ENCODE measurements at regions of chr19 and their contacts with region 1.

Region 1: DNA sequence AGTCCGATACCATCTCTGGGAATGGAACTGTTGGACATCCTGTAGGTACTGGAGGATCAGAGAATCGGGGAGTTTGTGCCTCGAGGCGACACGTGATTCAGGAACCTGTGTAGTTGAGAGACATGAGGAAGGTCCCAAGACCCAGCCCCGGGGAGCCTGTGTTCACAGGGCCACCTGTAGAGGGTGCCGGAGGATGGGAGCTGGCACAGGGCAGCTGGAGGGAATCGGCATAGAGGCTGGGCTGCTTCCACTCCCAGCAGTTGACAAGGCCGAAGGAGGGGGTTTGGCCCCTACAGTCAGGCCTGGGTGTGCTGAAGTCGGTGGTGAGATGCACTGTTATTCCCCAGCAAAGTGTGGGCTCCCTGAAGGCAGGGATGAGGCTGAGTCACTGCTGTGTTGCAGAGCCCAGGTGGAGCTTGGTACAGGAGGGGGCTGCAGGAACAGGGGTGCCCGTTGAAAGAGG is 2.5 kb upstream of the ISYNA1 start:
- DNase-seq: no peak
- H3K4me3 ChIP-seq: no peak overlapping the region
- H3K27ac ChIP-seq: peak overlapping the region in 1 of 2 donors; percentile 21
- H3K4me1 ChIP-seq: peaks cover 0 to 10% of the 10 kb centered on the region in 2 donors
- H3K27me3 ChIP-seq: no peaks in the 10 kb centered on the region
- CTCF ChIP-seq: peak in 3 of 4 experiments; percentile 8 to 20 (median 18)
- POLR2A ChIP-seq: no peak

Region 2: DNA sequence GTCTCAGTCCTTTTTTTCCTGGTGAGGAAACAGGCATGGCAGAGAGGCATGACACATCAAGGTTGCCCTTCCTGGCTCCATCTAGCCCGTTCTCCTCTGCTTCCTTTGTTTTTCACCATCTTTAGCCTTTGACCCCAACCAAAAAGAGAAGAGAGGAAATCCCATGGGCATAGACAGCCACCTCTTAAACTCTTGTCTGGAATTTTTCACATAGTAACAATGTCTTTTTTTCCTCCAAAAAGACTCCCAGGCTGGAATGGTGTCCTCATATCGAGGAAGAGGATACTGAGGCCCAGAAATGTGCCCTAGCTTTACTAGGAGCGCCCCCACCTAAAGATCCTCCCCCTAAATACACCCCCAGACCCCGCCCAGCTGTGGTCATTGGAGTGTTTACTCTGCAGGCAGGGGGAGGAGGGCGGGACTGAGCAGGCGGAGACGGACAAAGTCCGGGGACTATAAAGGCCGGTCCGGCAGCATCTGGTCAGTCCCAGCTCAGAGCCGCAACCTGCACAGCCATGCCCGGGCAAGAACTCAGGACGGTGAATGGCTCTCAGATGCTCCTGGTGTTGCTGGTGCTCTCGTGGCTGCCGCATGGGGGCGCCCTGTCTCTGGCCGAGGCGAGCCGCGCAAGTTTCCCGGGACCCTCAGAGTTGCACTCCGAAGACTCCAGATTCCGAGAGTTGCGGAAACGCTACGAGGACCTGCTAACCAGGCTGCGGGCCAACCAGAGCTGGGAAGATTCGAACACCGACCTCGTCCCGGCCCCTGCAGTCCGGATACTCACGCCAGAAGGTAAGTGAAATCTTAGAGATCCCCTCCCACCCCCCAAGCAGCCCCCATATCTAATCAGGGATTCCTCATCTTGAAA is 54.5 kb before region 1 on chr19 and contains the start of gene GDF15:
- intact Hi-C with region 1: no loop called
- DNase-seq: peak; percentile 53 to 56
- H3K4me3 ChIP-seq: no peak within 1 kb of the TSS
- H3K27ac ChIP-seq: peak within 1 kb of the TSS in 1 of 2 donors; percentile 12
- H3K4me1 ChIP-seq: peaks cover 0 to 9% of the 10 kb centered on the region in 2 donors
- H3K27me3 ChIP-seq: no peaks in the 10 kb centered on the region
- CTCF ChIP-seq: peak in 3 of 4 experiments; percentile 27 to 40 (median 32)
- POLR2A ChIP-seq: peak in 1 of 2 donors; percentile 46
- total RNA-seq, gene GDF15: 0.41 to 13.1 (median 1.6) TPM

Region 3: GRCh38 chr19:18397242-18398202 is 42.9 kb before region 1 on chr19 and contains the start of gene LRRC25:
- intact Hi-C with region 1: no loop called
- DNase-seq: no peak
- H3K4me3 ChIP-seq: no peak within 1 kb of the TSS
- H3K27ac ChIP-seq: no peak within 1 kb of the TSS
- H3K4me1 ChIP-seq: no peaks in the 10 kb centered on the region
- H3K27me3 ChIP-seq: peaks cover 6% of the 10 kb centered on the region in 2 donors
- CTCF ChIP-seq: no peak
- POLR2A ChIP-seq: no peak
- total RNA-seq, gene LRRC25: 0.51 to 2.3 (median 1.9) TPM in 3 of 4 donors, not detected in the other

Region 4: GRCh38 chr19:18571564-18572300 is 131.3 kb after region 1 on chr19 and contains the start of gene UBA52:
- intact Hi-C with region 1: loop called (anchors 10 kb)
- DNase-seq: peak; percentile 96 to 99
- H3K4me3 ChIP-seq: peak within 1 kb of the TSS; percentile 72 to 91
- H3K27ac ChIP-seq: peak within 1 kb of the TSS; percentile 75 to 92
- H3K4me1 ChIP-seq: peaks cover 8 to 9% of the 10 kb centered on the region in 2 donors
- H3K27me3 ChIP-seq: no peaks in the 10 kb centered on the region
- CTCF ChIP-seq: peak in 2 of 4 experiments; percentile 19 to 21
- POLR2A ChIP-seq: peak; percentile 85 to 95
- total RNA-seq, gene UBA52: 295 to 1,369 (median 721) TPM

Measured in uterus (tissue), 4 donors.